CD4-positive, alpha-beta T cell (primary cell): ENCODE measurements at regions of chr3 and their contacts with region 1.

Region 1: DNA sequence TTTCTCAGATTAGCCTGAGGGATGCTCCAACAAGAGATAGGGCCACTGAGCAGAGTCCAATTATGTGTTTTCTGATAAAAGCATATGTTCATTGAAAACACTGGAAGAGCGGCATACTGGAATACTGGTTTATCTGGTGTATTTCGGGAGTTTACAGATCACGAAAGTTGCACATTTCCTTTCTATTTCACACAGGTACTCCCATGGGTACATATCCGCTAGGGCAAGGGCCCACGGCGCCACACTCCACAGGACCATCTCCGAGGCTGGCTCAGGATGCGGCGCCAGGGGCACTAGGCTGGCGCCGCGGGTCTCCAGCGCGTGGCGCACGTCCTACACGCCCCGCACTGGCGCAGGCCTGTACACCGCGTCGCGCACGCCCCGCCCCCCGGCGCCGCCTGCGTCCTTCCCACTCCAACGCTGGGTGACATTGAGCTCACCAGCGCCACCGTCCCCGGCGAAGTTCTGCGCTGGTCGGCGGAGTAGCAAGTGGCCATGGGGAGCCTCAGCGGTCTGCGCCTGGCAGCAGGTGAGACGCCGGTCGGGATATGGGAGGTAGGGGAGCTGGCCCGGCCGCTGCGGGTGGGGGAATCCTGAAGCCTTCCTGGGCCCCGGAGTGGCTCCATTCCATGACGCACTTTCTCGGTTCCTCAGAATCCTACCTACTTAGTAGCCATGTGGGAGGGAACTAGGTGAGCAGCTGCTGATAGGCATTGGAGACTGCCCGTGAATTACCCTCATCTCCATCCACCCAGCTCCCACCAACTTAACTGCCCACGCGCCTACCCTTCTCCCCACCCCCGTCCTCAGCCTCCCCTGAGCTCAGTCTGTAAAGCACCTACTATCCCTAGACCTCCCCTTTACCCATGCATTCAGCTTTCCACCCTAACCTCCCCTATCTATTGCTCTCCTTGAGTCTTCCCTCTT is at the start of gene FAM162A:
- DNase-seq: peak; percentile 87 to 98 (median 92)
- ATAC-seq: peak; percentile 94
- H3K4me3 ChIP-seq: peak within 1 kb of the TSS; percentile 76
- H3K4me3 Mint-ChIP-seq: peak within 1 kb of the TSS; percentile 94
- H3K27ac ChIP-seq: peak within 1 kb of the TSS; percentile 61 to 71
- H3K27ac Mint-ChIP-seq: peak within 1 kb of the TSS; percentile 87
- H3K4me1 ChIP-seq: peaks cover 17% of the 10 kb centered on the region
- H3K4me1 Mint-ChIP-seq: peaks cover 54% of the 10 kb centered on the region
- H3K27me3 ChIP-seq: no peaks in the 10 kb centered on the region
- H3K27me3 Mint-ChIP-seq: no peaks in the 10 kb centered on the region
- CTCF ChIP-seq: peak; percentile 71
- total RNA-seq, gene FAM162A: 32.8 to 34.6 TPM

Region 2: DNA sequence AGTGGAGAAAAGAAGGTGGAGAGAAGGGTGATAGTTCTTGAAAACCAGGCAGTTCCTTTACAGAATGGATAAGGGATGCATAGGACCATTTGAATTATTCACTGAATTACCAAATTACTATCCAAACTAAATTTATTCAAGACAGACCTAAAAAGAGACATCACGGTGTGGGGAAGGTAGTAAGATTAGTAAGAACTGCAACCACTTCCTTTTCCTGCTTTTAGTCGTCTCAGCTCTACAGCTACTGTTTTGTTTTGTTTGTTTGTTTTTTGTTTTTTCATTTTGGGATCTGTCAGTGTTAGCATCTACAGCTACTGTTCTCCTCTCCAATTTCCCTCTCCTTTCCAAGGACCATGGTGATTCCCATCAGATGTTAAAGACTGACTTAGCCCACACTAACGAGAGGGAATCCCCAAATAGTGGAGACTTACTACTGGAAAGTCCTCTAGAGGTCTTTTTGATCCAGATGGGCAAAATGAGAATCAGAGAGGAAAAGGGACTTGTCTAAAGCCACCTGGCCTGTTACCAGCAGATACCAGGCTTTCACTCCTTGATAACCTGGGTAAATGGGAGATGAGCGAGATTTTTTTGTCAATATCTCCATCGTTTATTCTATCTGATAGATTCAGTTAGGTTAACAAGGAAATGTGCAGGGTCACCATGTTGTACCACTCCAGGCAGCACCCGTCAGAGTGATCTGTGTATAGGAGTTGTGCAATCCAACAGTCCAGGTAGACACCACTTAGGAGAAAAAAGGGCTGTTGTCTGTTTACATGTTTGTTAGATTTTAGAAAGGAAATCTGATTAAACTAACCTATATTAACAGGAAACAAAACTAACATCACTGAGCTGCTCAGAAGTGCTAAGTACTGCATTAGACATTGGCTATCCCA is 729.3 kb before region 1 on chr3:
- CTCF ChIA-PET with region 1: no interaction called
- POLR2A ChIA-PET with region 1: interaction called, 5 read pairs
- intact Hi-C with region 1: loop called in 1 of 2 experiments (anchors 10 kb)
- DNase-seq: peak in 3 of 14 experiments; percentile 36 to 60 (median 40)
- ATAC-seq: peak; percentile 73
- H3K4me3 ChIP-seq: no peak overlapping the region
- H3K4me3 Mint-ChIP-seq: peak overlapping the region; percentile 34
- H3K27ac ChIP-seq: peak overlapping the region in 1 of 2 donors; percentile 62
- H3K27ac Mint-ChIP-seq: peak overlapping the region; percentile 76
- H3K4me1 ChIP-seq: peaks cover 52% of the 10 kb centered on the region
- H3K4me1 Mint-ChIP-seq: peaks cover 86% of the 10 kb centered on the region
- H3K27me3 ChIP-seq: no peaks in the 10 kb centered on the region
- H3K27me3 Mint-ChIP-seq: no peaks in the 10 kb centered on the region
- CTCF ChIP-seq: no peak

Region 3: DNA sequence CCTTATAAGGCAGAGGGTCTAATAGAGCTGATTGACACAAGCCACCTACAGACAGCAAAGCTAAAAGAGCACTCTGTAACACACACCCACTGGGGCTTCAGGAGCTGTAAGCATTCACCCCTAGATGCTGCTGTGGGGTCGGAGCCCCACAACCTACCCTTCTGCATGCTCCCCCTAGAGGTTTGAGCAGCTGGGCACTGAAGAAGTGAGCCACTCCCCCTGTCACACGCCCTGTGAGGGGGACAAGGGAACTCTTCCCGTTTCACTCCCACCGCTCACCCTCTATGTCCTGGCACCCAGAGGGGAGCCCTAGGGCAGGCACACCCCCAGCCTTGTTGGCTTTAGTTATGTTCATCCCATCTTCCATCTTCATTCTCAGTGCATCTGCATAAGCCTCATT is 68.4 kb before region 1 on chr3:
- CTCF ChIA-PET with region 1: no interaction called
- POLR2A ChIA-PET with region 1: no interaction called
- intact Hi-C with region 1: no loop called
- DNase-seq: no peak
- ATAC-seq: no peak
- H3K4me3 ChIP-seq: no peak overlapping the region
- H3K4me3 Mint-ChIP-seq: no peak overlapping the region
- H3K27ac ChIP-seq: no peak overlapping the region
- H3K27ac Mint-ChIP-seq: no peak overlapping the region
- H3K4me1 ChIP-seq: peaks cover 11% of the 10 kb centered on the region
- H3K4me1 Mint-ChIP-seq: peaks cover 7% of the 10 kb centered on the region
- H3K27me3 ChIP-seq: no peaks in the 10 kb centered on the region
- H3K27me3 Mint-ChIP-seq: peaks cover 5% of the 10 kb centered on the region
- CTCF ChIP-seq: no peak

Region 4: GRCh38 chr3:122407946-122408345 is 23.9 kb after region 1 on chr3:
- CTCF ChIA-PET with region 1: interaction called, 6 read pairs
- POLR2A ChIA-PET with region 1: interaction called, 11 read pairs
- intact Hi-C with region 1: no loop called
- DNase-seq: no peak
- ATAC-seq: no peak
- H3K4me3 ChIP-seq: no peak overlapping the region
- H3K4me3 Mint-ChIP-seq: no peak overlapping the region
- H3K27ac ChIP-seq: no peak overlapping the region
- H3K27ac Mint-ChIP-seq: no peak overlapping the region
- H3K4me1 ChIP-seq: no peaks in the 10 kb centered on the region
- H3K4me1 Mint-ChIP-seq: peaks cover 12% of the 10 kb centered on the region
- H3K27me3 ChIP-seq: no peaks in the 10 kb centered on the region
- H3K27me3 Mint-ChIP-seq: no peaks in the 10 kb centered on the region
- CTCF ChIP-seq: no peak

Region 5: GRCh38 chr3:122514123-122515019 is 130.3 kb after region 1 on chr3 and contains the start of gene KPNA1:
- CTCF ChIA-PET with region 1: interaction called, 7 read pairs
- POLR2A ChIA-PET with region 1: interaction called, 30 read pairs
- intact Hi-C with region 1: loop called in 1 of 2 experiments (anchors 1 kb)
- DNase-seq: peak; percentile 70 to 95 (median 82)
- ATAC-seq: peak; percentile 85
- H3K4me3 ChIP-seq: peak within 1 kb of the TSS; percentile 68
- H3K4me3 Mint-ChIP-seq: peak within 1 kb of the TSS; percentile 89
- H3K27ac ChIP-seq: peak within 1 kb of the TSS; percentile 83 to 97
- H3K27ac Mint-ChIP-seq: peak within 1 kb of the TSS; percentile 82
- H3K4me1 ChIP-seq: peaks cover 17% of the 10 kb centered on the region
- H3K4me1 Mint-ChIP-seq: peaks cover 44% of the 10 kb centered on the region
- H3K27me3 ChIP-seq: no peaks in the 10 kb centered on the region
- H3K27me3 Mint-ChIP-seq: no peaks in the 10 kb centered on the region
- CTCF ChIP-seq: no peak
- total RNA-seq, gene KPNA1: 46.2 to 49.8 TPM

Region 6: GRCh38 chr3:122679085-122679881 is 295.2 kb after region 1 on chr3:
- CTCF ChIA-PET with region 1: interaction called, 7 read pairs
- POLR2A ChIA-PET with region 1: interaction called, 22 read pairs
- intact Hi-C with region 1: loop called in 1 of 2 experiments (anchors 2 kb)
- DNase-seq: peak; percentile 71 to 92 (median 78)
- ATAC-seq: peak; percentile 68
- H3K4me3 ChIP-seq: peak overlapping the region; percentile 93
- H3K4me3 Mint-ChIP-seq: peak overlapping the region; percentile 93
- H3K27ac ChIP-seq: peak overlapping the region; percentile 88 to 91
- H3K27ac Mint-ChIP-seq: peak overlapping the region; percentile 96
- H3K4me1 ChIP-seq: peaks cover 46% of the 10 kb centered on the region
- H3K4me1 Mint-ChIP-seq: peaks cover 54% of the 10 kb centered on the region
- H3K27me3 ChIP-seq: no peaks in the 10 kb centered on the region
- H3K27me3 Mint-ChIP-seq: no peaks in the 10 kb centered on the region
- CTCF ChIP-seq: peak; percentile 83

Region 7: GRCh38 chr3:122826278-122826677 is 442.2 kb after region 1 on chr3:
- CTCF ChIA-PET with region 1: no interaction called
- POLR2A ChIA-PET with region 1: no interaction called
- intact Hi-C with region 1: no loop called
- DNase-seq: no peak
- ATAC-seq: no peak
- H3K4me3 ChIP-seq: no peak overlapping the region
- H3K4me3 Mint-ChIP-seq: no peak overlapping the region
- H3K27ac ChIP-seq: no peak overlapping the region
- H3K27ac Mint-ChIP-seq: no peak overlapping the region
- H3K4me1 ChIP-seq: no peaks in the 10 kb centered on the region
- H3K4me1 Mint-ChIP-seq: no peaks in the 10 kb centered on the region
- H3K27me3 ChIP-seq: no peaks in the 10 kb centered on the region
- H3K27me3 Mint-ChIP-seq: no peaks in the 10 kb centered on the region
- CTCF ChIP-seq: no peak

Region 8: GRCh38 chr3:123584988-123585937 is 1201.2 kb after region 1 on chr3 and contains the start of gene HACD2:
- CTCF ChIA-PET with region 1: interaction called, 3 read pairs
- POLR2A ChIA-PET with region 1: interaction called, 8 read pairs
- intact Hi-C with region 1: loop called in 1 of 2 experiments (anchors 5 kb)
- DNase-seq: peak; percentile 85 to 98 (median 92)
- ATAC-seq: peak; percentile 93
- H3K4me3 ChIP-seq: peak within 1 kb of the TSS; percentile 79
- H3K4me3 Mint-ChIP-seq: peak within 1 kb of the TSS; percentile 95
- H3K27ac ChIP-seq: peak within 1 kb of the TSS; percentile 84 to 92
- H3K27ac Mint-ChIP-seq: peak within 1 kb of the TSS; percentile 89
- H3K4me1 ChIP-seq: peaks cover 16% of the 10 kb centered on the region
- H3K4me1 Mint-ChIP-seq: peaks cover 25% of the 10 kb centered on the region
- H3K27me3 ChIP-seq: no peaks in the 10 kb centered on the region
- H3K27me3 Mint-ChIP-seq: no peaks in the 10 kb centered on the region
- CTCF ChIP-seq: no peak
- total RNA-seq, gene HACD2: 12.1 to 13.3 TPM